CD8-positive, alpha-beta T cell (primary cell): ENCODE measurements at regions of chr17 and their contacts with region 1.

Region 1: DNA sequence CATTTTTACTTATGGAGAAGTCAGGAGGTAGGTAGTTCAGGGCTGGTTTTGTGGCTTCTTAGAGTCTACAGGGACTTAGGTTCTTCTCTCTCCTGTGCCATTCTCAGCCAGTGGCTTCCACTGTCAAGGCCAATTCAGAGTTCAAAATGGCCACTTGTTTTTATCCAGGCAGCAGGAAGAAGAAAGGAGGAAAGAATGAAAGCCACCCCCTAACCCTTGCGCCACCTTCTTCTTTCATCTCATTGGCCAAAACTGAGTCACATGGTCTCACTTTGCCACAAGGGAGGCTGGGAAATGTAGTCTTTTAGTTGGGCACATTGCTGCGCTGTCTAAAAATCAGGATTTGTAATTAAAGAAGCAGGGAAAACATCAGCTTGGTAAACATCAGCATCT is 60.8 kb upstream of the MED9 start:
- DNase-seq: peak in 2 of 9 experiments; percentile 53 to 66
- ATAC-seq: peak; percentile 64
- H3K4me3 ChIP-seq: no peak overlapping the region
- H3K4me3 Mint-ChIP-seq: no peak overlapping the region
- H3K27ac ChIP-seq: no peak overlapping the region
- H3K27ac Mint-ChIP-seq: no peak overlapping the region
- H3K4me1 ChIP-seq: peaks cover 19% of the 10 kb centered on the region
- H3K4me1 Mint-ChIP-seq: peaks cover 14% of the 10 kb centered on the region
- H3K27me3 ChIP-seq: no peaks in the 10 kb centered on the region
- H3K27me3 Mint-ChIP-seq: no peaks in the 10 kb centered on the region
- CTCF ChIP-seq: no peak

Region 2: DNA sequence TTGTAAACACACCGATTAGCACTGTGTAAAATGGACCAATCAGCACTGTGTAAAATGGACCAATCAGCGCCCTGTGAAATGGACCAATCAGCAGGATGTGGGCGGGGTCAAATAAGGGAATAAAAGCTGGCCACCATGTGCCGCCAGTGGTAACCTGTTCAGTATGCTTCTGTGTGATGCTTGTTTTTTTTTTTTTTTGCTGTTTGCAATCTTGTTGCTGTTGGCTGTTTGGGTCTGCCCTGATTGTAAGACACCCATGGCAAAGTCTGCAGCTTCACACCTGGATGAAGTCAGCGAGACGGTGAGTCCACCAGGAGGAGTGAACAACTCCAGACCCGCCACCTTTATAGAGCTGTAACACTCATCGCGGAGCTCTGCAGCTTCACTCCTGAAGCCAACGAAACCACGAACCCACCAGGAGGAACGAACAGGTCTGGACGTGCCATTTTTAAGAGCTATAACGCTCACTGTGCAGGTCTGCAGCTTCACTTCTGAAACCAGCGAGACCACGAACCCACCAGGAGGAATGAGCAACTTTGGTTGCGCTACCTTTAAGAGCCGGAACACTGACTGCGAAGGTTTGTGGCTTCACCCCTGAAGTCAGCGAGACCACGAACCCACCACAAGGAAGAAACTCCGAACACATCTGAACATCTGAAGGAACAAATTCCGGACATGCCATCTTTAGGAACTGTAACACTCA is 24.2 kb before region 1 on chr17:
- CTCF ChIA-PET with region 1: interaction called, 3 read pairs
- POLR2A ChIA-PET with region 1: interaction called, 7 read pairs
- intact Hi-C with region 1: loop called in 1 of 2 experiments (anchors 1 kb)
- DNase-seq: peak; percentile 37 to 87 (median 62)
- ATAC-seq: peak; percentile 82
- H3K4me3 ChIP-seq: peak overlapping the region; percentile 47 to 49
- H3K4me3 Mint-ChIP-seq: peak overlapping the region; percentile 83
- H3K27ac ChIP-seq: peak overlapping the region; percentile 34 to 41
- H3K27ac Mint-ChIP-seq: peak overlapping the region; percentile 88
- H3K4me1 ChIP-seq: peaks cover 24% of the 10 kb centered on the region
- H3K4me1 Mint-ChIP-seq: peaks cover 25% of the 10 kb centered on the region
- H3K27me3 ChIP-seq: no peaks in the 10 kb centered on the region
- H3K27me3 Mint-ChIP-seq: peaks cover 2% of the 10 kb centered on the region
- CTCF ChIP-seq: no peak

Region 3: GRCh38 chr17:17401271-17401781 is 14.7 kb before region 1 on chr17:
- CTCF ChIA-PET with region 1: interaction called, 3 read pairs
- POLR2A ChIA-PET with region 1: interaction called, 7 read pairs
- intact Hi-C with region 1: loop called in 1 of 2 experiments (anchors 2 kb)
- DNase-seq: peak in 1 of 9 experiments; percentile 17
- ATAC-seq: no peak
- H3K4me3 ChIP-seq: no peak overlapping the region
- H3K4me3 Mint-ChIP-seq: no peak overlapping the region
- H3K27ac ChIP-seq: no peak overlapping the region
- H3K27ac Mint-ChIP-seq: no peak overlapping the region
- H3K4me1 ChIP-seq: peaks cover 43% of the 10 kb centered on the region
- H3K4me1 Mint-ChIP-seq: peaks cover 67% of the 10 kb centered on the region
- H3K27me3 ChIP-seq: no peaks in the 10 kb centered on the region
- H3K27me3 Mint-ChIP-seq: no peaks in the 10 kb centered on the region
- CTCF ChIP-seq: no peak

Region 4: DNA sequence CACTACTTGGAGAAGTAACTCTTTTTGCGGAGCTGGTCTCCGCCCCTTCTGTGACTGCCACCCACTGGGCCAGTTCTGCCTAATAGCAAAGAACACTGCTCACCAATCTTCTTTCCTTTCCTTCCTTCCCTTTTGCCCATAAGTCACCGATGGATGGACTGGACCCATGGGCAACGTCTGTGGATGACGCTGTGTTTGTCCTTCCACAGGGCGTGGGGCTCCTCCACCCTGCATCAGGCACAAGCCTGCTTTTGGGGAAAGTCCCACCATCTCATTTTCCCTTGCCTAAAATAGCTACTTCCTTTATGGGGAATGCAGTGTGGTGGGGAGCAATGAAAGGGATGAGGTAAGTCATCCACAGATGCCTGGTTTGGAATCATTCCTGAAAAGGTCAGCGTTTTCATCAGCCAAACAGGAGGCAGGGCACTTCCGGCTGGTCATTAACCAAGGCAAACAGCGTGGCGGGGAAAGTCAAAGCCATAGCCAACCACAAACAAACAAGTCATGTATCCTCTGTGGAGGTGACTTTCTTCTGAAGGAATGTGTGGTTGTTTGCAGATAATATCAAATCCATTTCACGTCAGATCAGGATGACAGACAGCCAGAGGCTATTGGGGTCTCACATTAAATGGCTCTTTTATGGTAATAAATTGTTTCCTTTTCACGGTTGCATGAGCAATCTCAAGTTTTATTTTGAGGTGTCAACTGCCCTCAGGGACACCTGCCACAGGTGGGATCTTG is 30.1 kb after region 1 on chr17:
- CTCF ChIA-PET with region 1: no interaction called
- POLR2A ChIA-PET with region 1: no interaction called
- intact Hi-C with region 1: no loop called
- DNase-seq: no peak
- ATAC-seq: no peak
- H3K4me3 ChIP-seq: no peak overlapping the region
- H3K4me3 Mint-ChIP-seq: no peak overlapping the region
- H3K27ac ChIP-seq: no peak overlapping the region
- H3K27ac Mint-ChIP-seq: no peak overlapping the region
- H3K4me1 ChIP-seq: no peaks in the 10 kb centered on the region
- H3K4me1 Mint-ChIP-seq: no peaks in the 10 kb centered on the region
- H3K27me3 ChIP-seq: no peaks in the 10 kb centered on the region
- H3K27me3 Mint-ChIP-seq: no peaks in the 10 kb centered on the region
- CTCF ChIP-seq: no peak

Region 5: GRCh38 chr17:17628388-17629008 is 212.5 kb after region 1 on chr17:
- CTCF ChIA-PET with region 1: no interaction called
- POLR2A ChIA-PET with region 1: no interaction called
- intact Hi-C with region 1: no loop called
- DNase-seq: peak in 7 of 9 experiments; percentile 10 to 71 (median 42)
- ATAC-seq: peak; percentile 74
- H3K4me3 ChIP-seq: peak overlapping the region; percentile 42 to 51
- H3K4me3 Mint-ChIP-seq: peak overlapping the region; percentile 96
- H3K27ac ChIP-seq: peak overlapping the region; percentile 51 to 73
- H3K27ac Mint-ChIP-seq: peak overlapping the region; percentile 97
- H3K4me1 ChIP-seq: peaks cover 7% of the 10 kb centered on the region
- H3K4me1 Mint-ChIP-seq: peaks cover 9% of the 10 kb centered on the region
- H3K27me3 ChIP-seq: no peaks in the 10 kb centered on the region
- H3K27me3 Mint-ChIP-seq: no peaks in the 10 kb centered on the region
- CTCF ChIP-seq: no peak